Aorta (tissue), 5 donors: ENCODE measurements at regions of chr12 and their contacts with region 1.

Region 1: GRCh38 chr12:95336390-95337067 is 118.9 kb downstream of the VEZT start:
- DNase-seq: peak; percentile 71 to 78
- ATAC-seq: peak; percentile 92
- H3K4me3 ChIP-seq: no peak overlapping the region
- H3K27ac ChIP-seq: peak overlapping the region; percentile 48 to 59
- H3K4me1 ChIP-seq: no peaks in the 10 kb centered on the region
- H3K27me3 ChIP-seq: no peaks in the 10 kb centered on the region

Region 2: GRCh38 chr12:94545935-94546771 is 790.4 kb before region 1 on chr12:
- intact Hi-C with region 1: loop called (anchors 5 to 10 kb)
- DNase-seq: no peak
- ATAC-seq: peak; percentile 85
- H3K4me3 ChIP-seq: no peak overlapping the region
- H3K27ac ChIP-seq: no peak overlapping the region
- H3K4me1 ChIP-seq: no peaks in the 10 kb centered on the region
- H3K27me3 ChIP-seq: no peaks in the 10 kb centered on the region

Region 3: DNA sequence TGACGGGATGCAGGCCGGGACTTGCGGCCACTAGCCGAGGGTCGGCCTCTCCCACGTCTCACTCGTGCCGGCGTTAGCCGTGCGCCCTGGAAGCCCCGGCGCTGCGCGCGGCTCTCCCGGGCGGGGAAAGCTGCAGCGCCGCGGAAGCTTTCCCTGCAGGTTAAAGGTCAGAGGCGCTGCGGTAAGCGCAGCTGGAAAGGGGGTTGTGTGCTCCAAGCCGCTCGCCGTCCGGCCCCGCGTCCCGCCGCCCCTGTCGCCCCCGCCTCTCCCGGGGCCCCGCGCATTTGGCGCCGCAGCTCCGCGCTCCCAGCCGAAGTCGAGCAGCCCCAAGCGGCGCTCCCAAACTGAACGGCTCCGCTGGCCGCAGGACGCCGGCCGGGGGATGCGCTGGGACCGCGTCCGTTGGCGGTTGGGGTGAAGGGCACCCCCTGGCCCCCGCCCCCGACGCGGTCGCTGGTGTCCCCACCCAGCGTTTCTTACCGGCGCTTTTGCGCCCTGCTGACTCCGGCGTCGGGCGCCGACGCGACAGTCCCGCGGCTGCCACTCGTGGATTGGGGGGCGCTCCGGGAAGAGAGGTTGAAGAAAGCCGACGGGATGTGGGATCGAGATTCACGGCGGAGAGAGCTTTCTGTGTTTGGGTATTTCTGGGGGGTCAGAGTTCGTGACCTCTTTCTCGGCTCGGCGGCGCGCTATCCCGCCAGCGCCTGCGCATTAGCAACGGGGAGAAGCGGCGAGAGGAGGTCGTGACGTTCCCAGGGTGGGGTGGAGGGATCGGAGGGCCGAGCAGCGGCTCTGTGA is 263.4 kb before region 1 on chr12 and contains the start of gene NR2C1:
- intact Hi-C with region 1: loop called in 1 of 2 experiments (anchors 2 kb)
- DNase-seq: peak; percentile 96
- ATAC-seq: peak; percentile 96
- H3K4me3 ChIP-seq: peak within 1 kb of the TSS; percentile 76 to 91
- H3K27ac ChIP-seq: peak within 1 kb of the TSS in 1 of 2 donors; percentile 77
- H3K4me1 ChIP-seq: peaks cover 2% of the 10 kb centered on the region in 2 donors
- H3K27me3 ChIP-seq: no peaks in the 10 kb centered on the region
- total RNA-seq, gene NR2C1: 24.4 to 43.8 TPM

Region 4: GRCh38 chr12:95117178-95117599 is 219.3 kb before region 1 on chr12:
- intact Hi-C with region 1: loop called (anchors 1 kb)
- DNase-seq: peak in 1 of 2 donors; percentile 63
- ATAC-seq: peak; percentile 84
- H3K4me3 ChIP-seq: no peak overlapping the region
- H3K27ac ChIP-seq: peak overlapping the region in 1 of 2 donors; percentile 10
- H3K4me1 ChIP-seq: peaks cover 4 to 6% of the 10 kb centered on the region in 2 donors
- H3K27me3 ChIP-seq: no peaks in the 10 kb centered on the region

Region 5: DNA sequence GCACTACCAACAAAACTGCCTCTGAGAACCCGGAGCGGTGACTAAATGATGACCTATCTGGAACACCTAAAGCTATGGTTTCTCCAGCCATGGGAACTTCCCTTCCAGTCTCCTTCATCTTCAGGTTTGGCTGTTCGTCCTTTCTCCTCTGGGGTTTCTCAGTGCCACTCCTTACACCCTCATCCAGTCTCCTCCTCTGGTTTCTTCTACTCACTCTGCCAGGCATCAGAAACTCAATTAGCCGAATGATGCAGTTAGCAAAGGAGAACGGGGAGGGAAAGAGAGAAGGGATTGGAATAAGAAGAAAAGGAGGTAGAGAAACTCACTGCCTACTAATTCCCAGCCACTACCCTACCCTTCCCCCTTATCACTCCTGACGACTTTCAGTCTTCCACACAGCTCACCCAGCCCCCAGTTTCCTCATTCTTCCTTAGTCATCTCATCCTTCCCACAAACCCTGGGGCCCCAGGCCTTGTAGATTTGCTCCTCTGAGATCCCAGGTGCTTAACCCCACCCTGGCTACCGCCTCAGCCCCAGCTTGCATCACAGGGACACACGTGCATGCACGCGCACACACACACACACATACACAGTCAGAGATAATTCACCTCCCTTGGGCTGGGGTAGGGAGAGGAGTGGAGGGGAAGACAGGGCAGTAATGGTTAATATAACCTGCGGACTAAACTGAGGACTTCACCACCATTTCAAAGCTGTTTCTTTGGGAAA is 132.2 kb before region 1 on chr12:
- intact Hi-C with region 1: no loop called
- DNase-seq: peak in 1 of 2 donors; percentile 58
- ATAC-seq: peak; percentile 6
- H3K4me3 ChIP-seq: no peak overlapping the region
- H3K27ac ChIP-seq: peak overlapping the region in 1 of 2 donors; percentile 50
- H3K4me1 ChIP-seq: peaks cover 0 to 15% of the 10 kb centered on the region in 2 donors
- H3K27me3 ChIP-seq: no peaks in the 10 kb centered on the region

Region 6: DNA sequence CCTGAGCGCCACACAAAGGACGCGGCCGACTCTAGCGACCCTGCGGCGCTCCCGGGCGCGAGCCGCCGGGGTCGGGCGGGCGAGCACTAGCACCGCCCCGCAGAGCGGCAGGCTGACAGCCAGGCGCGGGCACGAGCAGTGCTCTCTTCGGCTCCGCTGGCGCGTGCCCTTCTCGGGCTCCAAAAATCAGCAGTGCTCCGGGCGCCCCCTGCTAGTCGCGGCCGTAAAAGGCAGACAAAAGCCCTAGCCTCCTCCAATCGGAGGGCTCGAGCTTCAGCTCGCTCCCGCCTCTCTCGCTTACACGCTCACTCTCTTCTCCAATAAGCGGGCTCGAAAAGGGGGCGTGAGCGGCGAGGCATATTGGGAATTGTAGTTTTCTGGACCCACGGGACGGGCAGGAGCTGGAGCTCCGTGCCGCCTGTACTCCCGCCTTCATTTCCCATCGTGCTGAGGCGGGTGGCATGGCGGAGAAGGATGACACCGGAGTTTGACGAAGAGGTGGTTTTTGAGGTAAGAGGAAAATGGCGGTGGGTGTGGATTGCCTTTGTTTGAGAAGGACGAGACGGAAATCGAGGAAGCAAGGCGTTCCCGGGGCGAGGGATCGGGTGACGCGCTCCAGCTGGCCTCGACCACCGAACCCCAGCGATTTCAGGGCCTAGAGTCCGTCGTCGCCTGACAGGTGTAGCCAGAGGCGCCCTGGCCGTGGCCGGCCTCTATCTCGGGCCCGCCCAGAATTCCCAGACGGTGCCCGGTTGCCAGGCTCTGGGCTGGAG is 119.0 kb before region 1 on chr12 and contains the starts of genes FGD6 and VEZT:
- intact Hi-C with region 1: loop called in 1 of 2 experiments (anchors 5 kb)
- DNase-seq: peak; percentile 99
- ATAC-seq: peak; percentile 97
- H3K4me3 ChIP-seq: peak within 1 kb of the TSS; percentile 95 to 98
- H3K27ac ChIP-seq: peak within 1 kb of the TSS; percentile 51 to 97
- H3K4me1 ChIP-seq: peaks cover 0 to 2% of the 10 kb centered on the region in 2 donors
- H3K27me3 ChIP-seq: no peaks in the 10 kb centered on the region
- total RNA-seq, gene FGD6: 8.9 to 15.5 TPM
- total RNA-seq, gene VEZT: 81.0 to 103 TPM

Region 7: GRCh38 chr12:95358111-95359083 is 21.9 kb after region 1 on chr12:
- intact Hi-C with region 1: no loop called
- DNase-seq: no peak
- ATAC-seq: no peak
- H3K4me3 ChIP-seq: no peak overlapping the region
- H3K27ac ChIP-seq: no peak overlapping the region
- H3K4me1 ChIP-seq: peaks cover 0 to 2% of the 10 kb centered on the region in 2 donors
- H3K27me3 ChIP-seq: no peaks in the 10 kb centered on the region

Region 8: GRCh38 chr12:95532851-95533250 is 196.3 kb after region 1 on chr12:
- intact Hi-C with region 1: loop called (anchors 5 to 10 kb)
- DNase-seq: no peak
- ATAC-seq: no peak
- H3K4me3 ChIP-seq: no peak overlapping the region
- H3K27ac ChIP-seq: no peak overlapping the region
- H3K4me1 ChIP-seq: peaks cover 0 to 4% of the 10 kb centered on the region in 2 donors
- H3K27me3 ChIP-seq: no peaks in the 10 kb centered on the region

Region 9: GRCh38 chr12:95608252-95609033 is 271.9 kb after region 1 on chr12:
- intact Hi-C with region 1: no loop called
- DNase-seq: peak; percentile 89 to 91
- ATAC-seq: peak; percentile 84
- H3K4me3 ChIP-seq: no peak overlapping the region
- H3K27ac ChIP-seq: peak overlapping the region; percentile 76 to 82
- H3K4me1 ChIP-seq: no peaks in the 10 kb centered on the region
- H3K27me3 ChIP-seq: no peaks in the 10 kb centered on the region